Spleen (tissue), 13 donors: ENCODE measurements at regions of chr14 and their contacts with region 1.

Region 1: DNA sequence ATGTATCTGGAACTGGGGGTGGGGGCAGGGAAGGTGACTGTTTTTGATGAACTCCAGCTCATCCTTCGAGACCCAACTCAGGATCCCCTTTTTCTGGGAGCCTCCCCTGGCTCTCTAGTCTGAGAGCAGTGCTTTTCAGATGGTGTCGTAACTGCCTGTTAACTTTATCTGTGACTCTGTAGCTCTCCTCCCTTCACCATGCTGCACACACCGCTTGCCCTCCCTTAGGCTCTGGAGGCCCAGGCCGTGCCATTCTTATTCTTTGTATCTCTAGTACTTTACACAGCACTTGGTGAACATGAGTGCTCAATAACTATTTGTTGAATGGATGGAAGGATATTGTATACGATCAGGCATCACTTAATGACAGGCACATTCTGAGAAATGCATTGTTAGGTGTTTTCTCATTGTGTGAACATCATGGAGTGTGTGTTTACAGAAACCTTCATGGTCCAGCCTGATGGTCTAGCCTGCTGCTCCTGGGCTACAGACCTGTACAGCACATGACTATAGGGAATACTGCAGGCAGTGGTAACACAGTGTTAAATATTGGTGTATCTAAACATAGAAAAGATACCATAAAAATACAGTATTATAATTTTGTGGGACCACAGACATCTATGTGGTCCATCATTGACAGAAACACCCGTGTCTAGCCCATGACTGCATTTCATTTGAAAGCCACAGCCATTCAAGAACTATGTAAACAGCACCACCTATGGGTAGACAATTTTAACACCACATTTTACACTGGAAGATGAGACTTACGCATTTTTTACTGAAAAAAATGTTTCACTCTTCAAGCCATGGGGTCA is 91.8 kb downstream of the EML1 start:
- DNase-seq: no peak
- H3K4me3 ChIP-seq: no peak overlapping the region
- H3K27ac ChIP-seq: no peak overlapping the region
- H3K4me1 ChIP-seq: no peaks in the 10 kb centered on the region
- H3K27me3 ChIP-seq: peaks cover 0 to 12% (median 0%) of the 10 kb centered on the region in 7 donors
- CTCF ChIP-seq: peak; percentile 25 to 79 (median 65)
- POLR2A ChIP-seq: no peak

Region 2: GRCh38 chr14:99518441-99519346 is 366.3 kb before region 1 on chr14:
- intact Hi-C with region 1: loop called (anchors 10 kb)
- DNase-seq: peak; percentile 93
- H3K4me3 ChIP-seq: no peak overlapping the region
- H3K27ac ChIP-seq: no peak overlapping the region
- H3K4me1 ChIP-seq: peaks cover 0 to 28% (median 14%) of the 10 kb centered on the region in 6 donors
- H3K27me3 ChIP-seq: no peaks in the 10 kb centered on the region
- CTCF ChIP-seq: peak; percentile 84 to 99 (median 98)
- POLR2A ChIP-seq: no peak

Region 3: GRCh38 chr14:99683619-99684355 is 201.3 kb before region 1 on chr14 and contains the start of gene CYP46A1:
- intact Hi-C with region 1: loop called (anchors 2 kb)
- DNase-seq: peak; percentile 99
- H3K4me3 ChIP-seq: peak within 1 kb of the TSS; percentile 63 to 94 (median 84)
- H3K27ac ChIP-seq: peak within 1 kb of the TSS; percentile 70 to 88 (median 80)
- H3K4me1 ChIP-seq: peaks cover 4 to 33% (median 18%) of the 10 kb centered on the region in 6 donors
- H3K27me3 ChIP-seq: peaks cover 0 to 37% (median 0%) of the 10 kb centered on the region in 7 donors
- CTCF ChIP-seq: peak in 1 of 11 experiments; percentile 20
- POLR2A ChIP-seq: no peak
- total RNA-seq, gene CYP46A1: 0.16 to 0.85 (median 0.40) TPM

Region 4: GRCh38 chr14:99729991-99730868 is 154.8 kb before region 1 on chr14:
- intact Hi-C with region 1: loop called (anchors 2 kb)
- DNase-seq: peak; percentile 86
- H3K4me3 ChIP-seq: peak overlapping the region in 7 of 8 donors; percentile 17 to 69 (median 38)
- H3K27ac ChIP-seq: no peak overlapping the region
- H3K4me1 ChIP-seq: peaks cover 0 to 50% (median 14%) of the 10 kb centered on the region in 6 donors
- H3K27me3 ChIP-seq: peaks cover 0 to 96% (median 21%) of the 10 kb centered on the region in 7 donors
- CTCF ChIP-seq: peak; percentile 41 to 93 (median 81)
- POLR2A ChIP-seq: no peak

Region 5: DNA sequence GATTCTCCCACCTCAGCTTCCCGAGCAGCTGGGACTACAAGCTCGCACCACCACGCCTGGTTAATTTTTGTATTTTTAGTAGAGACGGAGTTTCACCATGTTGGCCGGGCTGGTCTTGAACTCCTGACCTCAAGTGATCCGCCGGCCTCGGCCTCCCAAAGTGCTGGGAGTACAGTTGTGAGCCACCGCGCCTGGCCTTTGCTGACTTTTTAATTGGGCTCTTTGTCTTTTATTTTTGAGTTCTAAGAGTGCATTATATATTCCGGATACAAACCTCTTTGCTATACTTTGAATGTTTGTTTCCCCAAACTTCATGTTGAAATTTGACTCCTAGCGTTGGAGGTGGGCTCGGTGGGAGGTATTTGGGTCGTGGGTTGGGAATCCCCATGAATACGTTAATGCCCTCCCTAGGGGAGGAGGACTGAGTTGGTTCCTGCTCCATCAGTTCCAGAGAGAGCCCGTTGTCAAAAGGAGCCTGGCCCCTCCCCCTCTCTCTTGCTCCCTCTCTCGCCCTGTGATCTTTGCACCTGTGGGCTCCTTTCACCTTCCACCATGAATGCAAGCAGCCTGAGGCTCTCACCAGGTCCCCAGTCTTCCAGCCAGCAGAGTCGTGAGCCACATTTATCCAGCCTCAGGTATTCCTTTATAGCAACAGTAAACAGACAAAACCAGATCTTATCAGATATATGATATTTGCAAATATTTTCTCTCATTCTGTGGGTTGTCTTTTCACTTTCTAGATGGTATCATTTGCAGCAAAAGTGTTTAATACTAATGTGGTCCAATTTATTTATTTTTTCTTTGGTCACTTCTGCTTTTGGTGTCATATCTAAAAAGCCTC is 77.0 kb after region 1 on chr14:
- intact Hi-C with region 1: no loop called
- DNase-seq: no peak
- H3K4me3 ChIP-seq: no peak overlapping the region
- H3K27ac ChIP-seq: no peak overlapping the region
- H3K4me1 ChIP-seq: no peaks in the 10 kb centered on the region
- H3K27me3 ChIP-seq: peaks cover 0 to 49% (median 0%) of the 10 kb centered on the region in 7 donors
- CTCF ChIP-seq: no peak
- POLR2A ChIP-seq: no peak